PC-3 (cell line): ENCODE measurements at regions of chr7 and their contacts with region 1.

Region 1: DNA sequence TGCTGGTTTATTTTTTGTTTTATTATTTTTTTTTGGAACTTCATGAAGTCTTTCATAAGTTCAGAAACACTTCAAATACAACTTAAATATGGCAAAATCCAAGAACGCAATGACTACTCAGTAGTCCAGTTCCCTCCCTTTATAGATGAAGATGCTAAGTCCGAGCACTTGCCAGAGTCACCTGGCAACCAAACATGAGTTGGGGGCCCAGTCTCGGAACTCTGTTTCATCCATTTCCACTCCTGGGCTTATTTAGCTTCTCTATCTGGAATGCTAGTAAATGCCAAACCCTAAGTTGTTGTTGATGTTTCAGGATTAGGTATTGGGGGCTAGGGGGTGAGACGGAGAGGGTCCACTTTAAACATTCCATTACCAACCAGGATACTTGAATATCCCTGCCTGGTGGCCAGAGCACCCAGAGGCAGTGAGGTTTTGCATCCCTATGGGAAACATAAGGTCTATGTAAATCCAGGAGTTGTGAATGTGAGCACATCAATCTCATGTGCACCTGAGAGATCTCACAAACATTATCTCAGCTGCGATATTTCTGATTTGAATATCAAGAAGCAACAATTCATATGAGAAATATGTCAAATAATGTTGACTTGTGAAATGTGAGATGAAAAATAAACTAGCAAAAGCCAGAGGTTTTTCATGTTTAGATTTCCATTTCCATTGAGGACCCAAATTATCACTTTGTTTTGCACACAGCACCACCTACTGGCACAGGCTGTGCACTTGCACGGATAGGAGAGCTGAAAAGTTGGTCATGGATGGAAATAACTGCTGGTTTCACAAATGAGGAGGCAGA is 129.3 kb downstream of the PKD1L1 start:
- DNase-seq: peak; percentile 88
- ATAC-seq: peak; percentile 78
- H3K4me3 ChIP-seq: no peak overlapping the region
- H3K27ac ChIP-seq: no peak overlapping the region
- H3K4me1 ChIP-seq: peaks cover 18% of the 10 kb centered on the region
- H3K27me3 ChIP-seq: no peaks in the 10 kb centered on the region
- CTCF ChIP-seq: peak; percentile 97

Region 2: DNA sequence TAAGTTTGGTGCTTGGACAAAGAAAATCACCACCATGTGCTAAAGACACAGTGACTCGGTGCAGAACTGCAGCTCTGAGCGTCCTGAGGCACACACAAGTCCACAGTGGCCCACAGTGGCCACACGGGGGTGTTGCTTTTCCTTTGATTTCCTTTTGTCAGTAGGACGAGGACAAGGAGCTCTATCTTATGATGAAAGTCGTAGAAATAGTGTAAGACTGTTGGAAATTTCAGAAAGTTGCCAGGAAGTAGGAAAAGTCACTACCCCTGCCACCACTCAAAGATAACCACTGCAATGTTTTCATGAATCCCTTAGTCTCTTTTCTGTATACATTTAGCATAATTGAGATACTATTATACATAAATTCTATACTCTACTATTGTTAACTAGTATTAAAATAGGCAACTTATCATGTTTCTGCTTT is 383.1 kb before region 1 on chr7:
- CTCF ChIA-PET with region 1: interaction called, 16 read pairs
- POLR2A ChIA-PET with region 1: no interaction called
- intact Hi-C with region 1: loop called (anchors 1 kb)
- DNase-seq: peak; percentile 67
- ATAC-seq: peak; percentile 95
- H3K4me3 ChIP-seq: no peak overlapping the region
- H3K27ac ChIP-seq: no peak overlapping the region
- H3K4me1 ChIP-seq: no peaks in the 10 kb centered on the region
- H3K27me3 ChIP-seq: no peaks in the 10 kb centered on the region
- CTCF ChIP-seq: peak; percentile 76

Region 3: GRCh38 chr7:47571331-47572093 is 247.5 kb before region 1 on chr7:
- CTCF ChIA-PET with region 1: interaction called, 3 read pairs
- POLR2A ChIA-PET with region 1: no interaction called
- intact Hi-C with region 1: loop called (anchors 10 kb)
- DNase-seq: peak; percentile 84
- ATAC-seq: peak; percentile 50
- H3K4me3 ChIP-seq: peak overlapping the region; percentile 40
- H3K27ac ChIP-seq: peak overlapping the region; percentile 95
- H3K4me1 ChIP-seq: peaks cover 62% of the 10 kb centered on the region
- H3K27me3 ChIP-seq: no peaks in the 10 kb centered on the region
- CTCF ChIP-seq: no peak

Region 4: DNA sequence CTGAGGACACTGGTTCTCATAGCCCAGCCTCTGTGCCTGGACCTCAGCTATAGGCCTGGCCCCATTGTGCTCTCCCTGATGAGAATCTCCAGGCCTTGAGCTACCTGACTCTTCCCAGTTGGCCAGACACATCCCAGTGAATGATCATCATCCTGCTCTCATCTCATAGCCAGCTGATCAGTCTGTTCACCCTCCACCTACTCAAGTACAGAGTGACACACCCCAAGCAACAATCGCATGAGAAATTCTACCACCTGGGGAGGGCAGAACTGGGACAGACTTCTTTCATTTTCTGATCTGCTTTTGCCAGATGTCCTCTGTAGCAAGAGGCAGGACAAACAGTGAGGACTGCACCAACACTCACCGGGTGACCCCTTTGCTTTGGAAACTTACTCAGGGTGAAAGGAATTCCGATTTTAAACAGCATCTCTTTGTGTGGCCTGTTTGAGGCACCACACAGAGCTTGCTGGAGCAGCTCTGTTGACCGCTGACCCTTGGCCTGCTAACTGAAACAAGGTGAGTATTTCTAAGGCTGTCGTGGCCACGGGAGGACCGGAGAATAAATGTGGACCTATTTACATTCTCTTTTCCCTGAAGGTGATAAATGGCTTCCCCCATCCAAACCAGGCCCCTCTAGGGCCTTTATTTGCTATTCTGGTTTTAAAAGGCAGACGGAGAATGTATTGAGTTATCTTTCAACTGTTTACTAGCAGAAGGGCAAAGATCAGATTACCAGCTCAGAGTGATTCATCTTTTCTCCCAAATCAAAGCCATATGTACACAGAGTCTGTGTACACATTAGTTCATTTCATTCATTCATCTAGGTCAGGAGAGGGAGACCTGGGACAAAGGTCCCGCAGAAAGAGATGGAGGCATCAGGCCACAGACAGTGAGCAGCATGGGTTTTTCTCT is 55.7 kb before region 1 on chr7:
- CTCF ChIA-PET with region 1: interaction called, 3 read pairs
- POLR2A ChIA-PET with region 1: interaction called, 3 read pairs
- intact Hi-C with region 1: loop called (anchors 1 kb)
- DNase-seq: peak; percentile 90
- ATAC-seq: peak; percentile 90
- H3K4me3 ChIP-seq: peak overlapping the region; percentile 30; the same call in 1 of the 2 replicates
- H3K27ac ChIP-seq: peak overlapping the region; percentile 90
- H3K4me1 ChIP-seq: peaks cover 30% of the 10 kb centered on the region
- H3K27me3 ChIP-seq: no peaks in the 10 kb centered on the region
- CTCF ChIP-seq: no peak

Region 5: GRCh38 chr7:47792521-47793121 is 26.4 kb before region 1 on chr7:
- CTCF ChIA-PET with region 1: interaction called, 3 read pairs
- POLR2A ChIA-PET with region 1: no interaction called
- intact Hi-C with region 1: loop called (anchors 1 kb)
- DNase-seq: peak; percentile 60
- ATAC-seq: peak; percentile 92
- H3K4me3 ChIP-seq: no peak overlapping the region
- H3K27ac ChIP-seq: no peak overlapping the region
- H3K4me1 ChIP-seq: peaks cover 13% of the 10 kb centered on the region
- H3K27me3 ChIP-seq: no peaks in the 10 kb centered on the region
- CTCF ChIP-seq: peak; percentile 84

Region 6: DNA sequence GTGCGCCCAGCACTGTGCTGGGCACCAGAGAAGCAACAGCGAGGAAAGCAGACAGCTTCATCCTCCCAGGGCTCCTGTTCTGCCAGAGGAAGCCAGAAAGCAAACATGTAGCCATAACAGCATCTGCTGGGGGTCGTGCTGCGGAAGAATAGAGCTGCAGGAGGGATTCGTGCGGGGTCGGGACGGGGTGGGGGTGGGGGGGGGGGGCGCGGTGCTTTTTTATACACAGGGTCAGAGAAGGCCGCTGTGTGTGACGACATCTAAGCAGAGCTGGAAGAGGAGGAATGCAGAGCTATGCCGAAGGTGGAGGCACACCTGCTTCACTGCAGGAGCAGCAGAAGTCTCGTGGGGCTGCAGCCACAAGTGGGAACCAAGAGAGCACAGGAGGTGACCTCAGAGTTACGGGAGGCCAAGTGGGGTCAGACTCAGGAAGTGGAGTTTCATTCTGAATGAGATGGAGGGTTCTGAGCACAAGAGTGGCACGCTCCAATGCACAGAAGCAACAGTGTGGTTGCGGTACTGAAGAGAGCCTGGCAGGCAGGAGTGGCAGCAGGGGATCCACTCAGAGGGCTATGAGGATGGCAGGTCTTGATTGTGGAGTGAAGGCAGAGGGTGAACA is 118.2 kb after region 1 on chr7:
- CTCF ChIA-PET with region 1: no interaction called
- POLR2A ChIA-PET with region 1: no interaction called
- intact Hi-C with region 1: loop called (anchors 5 kb)
- DNase-seq: no peak
- ATAC-seq: no peak
- H3K4me3 ChIP-seq: no peak overlapping the region
- H3K27ac ChIP-seq: no peak overlapping the region
- H3K4me1 ChIP-seq: peaks cover 14% of the 10 kb centered on the region
- H3K27me3 ChIP-seq: no peaks in the 10 kb centered on the region
- CTCF ChIP-seq: no peak